ENCODE measurements at regions of chr3 and their contacts with region 1.

Region 1: GRCh38 chr3:40920041-40920440 is 279.3 kb upstream of the CTNNB1 start:
- DNase-seq: no peak
- H3K4me3 ChIP-seq: no peak overlapping the region
- H3K27ac ChIP-seq: no peak overlapping the region
- H3K4me1 ChIP-seq: peaks cover 4% of the 10 kb centered on the region
- H3K27me3 ChIP-seq: no peaks in the 10 kb centered on the region
- CTCF ChIP-seq: no peak
- POLR2A ChIP-seq: no peak

Region 2: DNA sequence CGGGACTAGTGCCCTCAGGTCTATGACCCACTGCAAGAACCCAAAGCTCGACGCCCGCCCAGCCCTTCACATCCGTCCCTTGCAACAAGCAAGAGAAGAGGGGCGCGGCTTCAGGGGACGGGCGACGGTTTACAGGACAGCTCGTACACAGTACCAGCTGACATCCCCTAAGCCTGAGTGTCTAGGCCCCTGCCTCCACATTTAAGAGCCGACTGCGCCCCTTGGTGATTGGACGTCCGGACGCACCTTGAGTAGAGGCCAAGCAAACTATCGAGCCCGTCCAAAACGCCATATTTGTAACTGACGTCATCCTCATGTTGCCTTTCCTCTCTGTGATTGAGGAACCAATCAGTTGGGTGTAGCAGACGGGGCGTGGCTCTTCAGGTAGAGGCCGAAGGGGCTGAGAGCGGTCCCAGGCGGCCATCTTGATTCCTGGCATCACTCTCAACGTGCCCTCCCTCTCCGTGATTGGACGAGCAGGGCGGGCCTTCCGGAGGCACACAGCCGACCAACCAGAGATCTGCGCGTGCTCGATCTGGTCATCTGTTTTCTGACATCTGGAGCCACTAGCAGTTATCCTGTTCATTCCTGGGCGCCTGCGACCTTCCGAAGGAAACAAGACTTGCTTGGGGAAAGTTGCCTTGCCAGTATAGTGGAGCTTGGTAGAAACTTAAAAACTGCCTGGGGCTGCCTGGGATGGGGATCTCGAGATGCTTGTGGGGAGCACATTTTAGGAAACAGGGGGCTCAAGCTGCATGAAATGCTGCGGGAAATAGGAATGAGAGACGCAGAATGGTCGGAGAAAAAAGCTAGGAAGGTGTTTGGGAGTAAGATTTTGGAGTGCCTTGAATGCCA is 466.9 kb before region 1 on chr3:
- CTCF ChIA-PET with region 1: no interaction called
- POLR2A ChIA-PET with region 1: no interaction called
- dilution Hi-C with region 1: no loop called
- intact Hi-C with region 1: no loop called
- DNase-seq: peak; percentile 99
- H3K4me3 ChIP-seq: peak overlapping the region; percentile 42 to 82 (median 73)
- H3K27ac ChIP-seq: peak overlapping the region; percentile 50
- H3K4me1 ChIP-seq: peaks cover 8% of the 10 kb centered on the region
- H3K27me3 ChIP-seq: no peaks in the 10 kb centered on the region
- CTCF ChIP-seq: no peak
- POLR2A ChIP-seq: peak; percentile 89

Region 3: GRCh38 chr3:41117398-41117870 is 197.4 kb after region 1 on chr3:
- CTCF ChIA-PET with region 1: no interaction called
- POLR2A ChIA-PET with region 1: no interaction called
- dilution Hi-C with region 1: no loop called
- intact Hi-C with region 1: loop called (anchors 1 kb)
- DNase-seq: peak; percentile 89
- H3K4me3 ChIP-seq: no peak overlapping the region
- H3K27ac ChIP-seq: peak overlapping the region; percentile 23
- H3K4me1 ChIP-seq: peaks cover 17% of the 10 kb centered on the region
- H3K27me3 ChIP-seq: peaks cover 4 to 21% of the 10 kb centered on the region in 2 experiments
- CTCF ChIP-seq: no peak
- POLR2A ChIP-seq: no peak

Region 4: GRCh38 chr3:41224120-41224806 is 304.2 kb after region 1 on chr3:
- CTCF ChIA-PET with region 1: interaction called, 3 read pairs
- POLR2A ChIA-PET with region 1: no interaction called
- dilution Hi-C with region 1: no loop called
- intact Hi-C with region 1: loop called (anchors 5 kb)
- DNase-seq: no peak
- H3K4me3 ChIP-seq: no peak overlapping the region
- H3K27ac ChIP-seq: no peak overlapping the region
- H3K4me1 ChIP-seq: peaks cover 4% of the 10 kb centered on the region
- H3K27me3 ChIP-seq: no peaks in the 10 kb centered on the region
- CTCF ChIP-seq: no peak
- POLR2A ChIP-seq: no peak

Region 5: GRCh38 chr3:41247055-41248004 is 327.3 kb after region 1 on chr3:
- CTCF ChIA-PET with region 1: no interaction called
- POLR2A ChIA-PET with region 1: no interaction called
- dilution Hi-C with region 1: no loop called
- intact Hi-C with region 1: loop called (anchors 5 kb)
- DNase-seq: no peak
- H3K4me3 ChIP-seq: no peak overlapping the region
- H3K27ac ChIP-seq: no peak overlapping the region
- H3K4me1 ChIP-seq: no peaks in the 10 kb centered on the region
- H3K27me3 ChIP-seq: no peaks in the 10 kb centered on the region
- CTCF ChIP-seq: no peak
- POLR2A ChIP-seq: no peak

Region 6: DNA sequence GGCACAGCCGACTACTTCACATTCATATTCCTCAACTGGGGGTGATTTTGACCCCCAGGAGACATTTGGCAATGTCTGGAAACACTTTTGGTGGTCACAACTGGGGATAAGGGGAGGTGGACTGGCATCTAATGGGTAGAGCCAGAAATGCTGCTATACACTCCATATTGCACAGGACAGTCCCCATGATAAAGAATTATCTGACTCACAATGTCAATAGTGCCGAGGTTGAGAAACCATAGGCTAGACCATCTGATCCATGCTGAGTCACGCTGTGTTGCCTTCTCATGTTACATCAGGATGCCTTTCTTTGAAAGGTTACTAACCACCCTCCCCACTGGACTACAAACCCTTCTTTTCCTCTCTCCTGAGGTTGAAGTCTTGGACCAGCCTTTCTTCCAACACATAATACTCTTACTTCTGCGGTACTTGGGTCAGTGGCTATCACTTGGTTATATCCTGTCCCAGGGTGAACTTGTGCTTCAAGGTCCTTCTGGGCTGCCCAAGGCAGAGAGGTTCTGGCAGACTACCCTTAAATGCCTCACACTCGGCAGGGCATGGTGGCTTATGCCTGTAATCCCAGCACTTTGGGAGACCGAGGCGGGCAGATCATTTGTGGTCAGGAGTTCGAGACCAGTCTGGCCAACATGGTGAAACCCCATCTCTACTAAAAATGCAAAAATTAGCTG is 348.1 kb after region 1 on chr3:
- CTCF ChIA-PET with region 1: no interaction called
- POLR2A ChIA-PET with region 1: no interaction called
- dilution Hi-C with region 1: no loop called
- intact Hi-C with region 1: no loop called
- DNase-seq: peak; percentile 61
- H3K4me3 ChIP-seq: no peak overlapping the region
- H3K27ac ChIP-seq: no peak overlapping the region
- H3K4me1 ChIP-seq: peaks cover 6% of the 10 kb centered on the region
- H3K27me3 ChIP-seq: no peaks in the 10 kb centered on the region
- CTCF ChIP-seq: no peak
- POLR2A ChIP-seq: no peak

Region 7: DNA sequence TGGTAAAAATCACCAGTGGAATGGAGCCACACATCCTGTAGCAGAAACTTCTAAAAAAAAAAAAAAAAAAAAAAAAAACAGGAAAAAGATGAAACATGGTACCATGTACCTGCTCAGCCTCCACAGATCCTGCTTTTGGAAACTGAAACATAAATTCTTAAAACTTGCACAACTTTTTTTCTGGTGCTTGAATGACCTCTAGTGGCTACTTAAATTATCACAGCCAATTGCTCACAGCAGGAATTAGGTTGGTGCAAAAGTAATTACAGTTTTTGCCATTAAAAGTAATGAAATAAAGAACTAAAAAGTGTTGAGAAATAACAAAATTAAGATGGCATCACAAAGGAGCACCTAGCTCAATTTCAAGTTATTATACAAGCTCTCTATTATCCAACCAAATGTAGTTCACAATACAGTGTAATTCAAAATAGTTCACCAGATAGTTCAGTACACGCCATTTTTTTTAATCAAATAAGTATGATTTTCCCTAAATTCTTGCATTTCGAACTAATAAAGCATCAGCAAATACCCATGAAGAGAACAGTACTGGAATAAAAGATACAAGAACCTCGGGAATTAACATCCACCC is 961.3 kb after region 1 on chr3:
- CTCF ChIA-PET with region 1: no interaction called
- POLR2A ChIA-PET with region 1: no interaction called
- dilution Hi-C with region 1: no loop called
- intact Hi-C with region 1: loop called (anchors 5 kb)
- DNase-seq: peak; percentile 60
- H3K4me3 ChIP-seq: no peak overlapping the region
- H3K27ac ChIP-seq: no peak overlapping the region
- H3K4me1 ChIP-seq: no peaks in the 10 kb centered on the region
- H3K27me3 ChIP-seq: no peaks in the 10 kb centered on the region
- CTCF ChIP-seq: peak; percentile 13 to 28
- POLR2A ChIP-seq: no peak

Region 8: GRCh38 chr3:42228806-42229205 is 1308.8 kb after region 1 on chr3:
- CTCF ChIA-PET with region 1: no interaction called
- POLR2A ChIA-PET with region 1: no interaction called
- dilution Hi-C with region 1: no loop called
- intact Hi-C with region 1: no loop called
- DNase-seq: no peak
- H3K4me3 ChIP-seq: no peak overlapping the region
- H3K27ac ChIP-seq: no peak overlapping the region
- H3K4me1 ChIP-seq: no peaks in the 10 kb centered on the region
- H3K27me3 ChIP-seq: no peaks in the 10 kb centered on the region
- CTCF ChIP-seq: peak in 1 of 2 donors; percentile 3
- POLR2A ChIP-seq: no peak